Activated naive CD4-positive, alpha-beta T cell treated with anti-CD3 and anti-CD28 coated beads for 36 hours (primary cell): ENCODE measurements at regions of chr2 and their contacts with region 1.

Region 1: DNA sequence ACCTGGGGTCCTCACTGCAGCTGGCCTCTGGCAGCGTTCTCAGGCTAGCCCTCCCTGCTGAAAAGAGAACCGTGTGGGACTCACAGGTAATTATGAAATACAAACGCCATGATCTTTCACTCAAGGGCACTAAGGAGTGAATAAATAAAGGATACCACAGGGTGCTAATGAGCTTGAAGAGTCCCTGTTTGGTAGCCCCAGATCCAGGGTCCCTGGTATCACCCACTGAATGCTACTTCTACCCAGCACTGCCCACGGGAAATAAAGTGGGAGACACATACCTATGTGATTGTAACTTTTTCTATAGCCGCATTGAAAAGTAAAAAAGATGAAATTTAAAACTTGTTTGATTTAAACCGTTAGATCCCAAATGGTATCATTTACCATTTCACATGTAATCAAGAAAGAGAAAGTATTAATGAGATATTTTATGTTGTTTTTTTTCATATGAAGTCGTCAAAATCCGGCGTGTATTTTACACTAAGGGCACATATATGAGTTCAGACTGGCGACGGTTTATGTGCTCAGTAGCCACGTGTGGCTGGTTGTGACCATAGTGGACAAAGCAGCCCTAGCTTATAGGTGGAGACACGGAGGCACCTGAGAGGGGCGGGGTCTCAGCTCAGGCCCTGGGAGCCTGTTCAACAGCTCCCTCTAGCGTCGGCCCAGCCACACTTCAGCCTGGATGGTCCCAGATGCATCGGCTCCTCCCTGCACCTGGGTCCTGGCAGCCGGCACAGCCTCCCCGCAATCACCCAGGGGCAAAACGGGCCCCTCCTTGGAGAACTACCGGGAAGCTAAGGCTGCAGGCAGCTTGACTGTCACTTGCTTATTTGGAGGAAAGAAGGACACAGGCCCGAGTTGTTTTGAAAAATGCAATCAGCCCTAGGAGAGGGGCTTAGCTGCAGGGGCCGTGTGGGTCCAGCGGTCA is 39.2 kb downstream of the ODC1 start:
- DNase-seq: peak; percentile 89
- H3K4me3 Mint-ChIP-seq: peak overlapping the region; percentile 59
- H3K27ac Mint-ChIP-seq: peak overlapping the region; percentile 97
- H3K4me1 Mint-ChIP-seq: peaks cover 46% of the 10 kb centered on the region
- H3K27me3 Mint-ChIP-seq: no peaks in the 10 kb centered on the region

Region 2: DNA sequence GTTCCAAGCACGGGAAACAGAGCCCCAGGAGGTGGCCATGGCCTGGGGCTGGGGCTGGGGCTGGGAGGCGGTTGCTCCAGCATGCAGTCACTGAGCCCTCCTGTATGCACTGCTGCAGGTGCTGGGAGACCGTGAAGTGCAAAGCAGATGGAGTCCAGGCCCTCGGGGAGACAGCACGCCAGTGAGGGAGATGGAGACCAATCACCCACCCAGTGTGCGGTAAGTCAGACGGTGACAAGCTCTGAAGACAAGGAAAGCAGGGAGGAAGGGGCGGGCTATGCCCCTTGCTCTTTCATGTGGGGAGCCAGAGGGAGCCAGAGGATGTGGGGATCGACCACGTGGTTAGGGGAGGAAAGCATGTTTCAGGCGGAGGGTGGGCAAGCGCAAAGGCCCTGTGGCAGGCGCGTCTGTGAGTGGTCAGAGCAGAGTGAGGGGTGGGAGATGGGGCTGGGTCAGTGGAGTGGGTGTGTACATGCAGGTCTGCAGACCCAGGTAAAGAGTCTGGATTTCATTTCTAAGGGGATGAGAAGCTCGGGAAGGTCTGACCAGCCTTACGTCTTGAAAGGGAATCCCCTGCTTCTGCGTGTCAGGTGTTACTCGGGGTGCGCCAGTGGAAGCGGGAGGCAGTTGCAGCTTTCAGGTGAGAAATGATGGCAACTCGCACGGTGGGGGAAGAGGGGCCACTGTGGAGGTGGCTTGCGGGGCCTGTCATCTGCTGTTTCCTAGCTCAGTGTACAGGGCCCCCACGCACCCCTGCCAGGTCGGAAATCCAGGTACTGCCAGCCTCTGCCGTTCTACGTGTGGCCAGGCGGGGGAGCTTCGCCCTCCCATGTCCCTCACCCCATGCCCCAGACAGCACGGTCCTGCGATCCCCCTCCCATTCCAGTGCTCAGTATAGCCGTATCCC is 266.9 kb before region 1 on chr2:
- CTCF ChIA-PET with region 1: interaction called, 38 read pairs
- intact Hi-C with region 1: loop called (anchors 1 kb)
- DNase-seq: no peak
- H3K4me3 Mint-ChIP-seq: no peak overlapping the region
- H3K27ac Mint-ChIP-seq: no peak overlapping the region
- H3K4me1 Mint-ChIP-seq: peaks cover 18% of the 10 kb centered on the region
- H3K27me3 Mint-ChIP-seq: no peaks in the 10 kb centered on the region

Region 3: GRCh38 chr2:10269711-10270610 is 139.0 kb before region 1 on chr2:
- CTCF ChIA-PET with region 1: interaction called, 31 read pairs
- intact Hi-C with region 1: loop called (anchors 1 kb)
- DNase-seq: no peak
- H3K4me3 Mint-ChIP-seq: no peak overlapping the region
- H3K27ac Mint-ChIP-seq: no peak overlapping the region
- H3K4me1 Mint-ChIP-seq: peaks cover 7% of the 10 kb centered on the region
- H3K27me3 Mint-ChIP-seq: no peaks in the 10 kb centered on the region

Region 4: DNA sequence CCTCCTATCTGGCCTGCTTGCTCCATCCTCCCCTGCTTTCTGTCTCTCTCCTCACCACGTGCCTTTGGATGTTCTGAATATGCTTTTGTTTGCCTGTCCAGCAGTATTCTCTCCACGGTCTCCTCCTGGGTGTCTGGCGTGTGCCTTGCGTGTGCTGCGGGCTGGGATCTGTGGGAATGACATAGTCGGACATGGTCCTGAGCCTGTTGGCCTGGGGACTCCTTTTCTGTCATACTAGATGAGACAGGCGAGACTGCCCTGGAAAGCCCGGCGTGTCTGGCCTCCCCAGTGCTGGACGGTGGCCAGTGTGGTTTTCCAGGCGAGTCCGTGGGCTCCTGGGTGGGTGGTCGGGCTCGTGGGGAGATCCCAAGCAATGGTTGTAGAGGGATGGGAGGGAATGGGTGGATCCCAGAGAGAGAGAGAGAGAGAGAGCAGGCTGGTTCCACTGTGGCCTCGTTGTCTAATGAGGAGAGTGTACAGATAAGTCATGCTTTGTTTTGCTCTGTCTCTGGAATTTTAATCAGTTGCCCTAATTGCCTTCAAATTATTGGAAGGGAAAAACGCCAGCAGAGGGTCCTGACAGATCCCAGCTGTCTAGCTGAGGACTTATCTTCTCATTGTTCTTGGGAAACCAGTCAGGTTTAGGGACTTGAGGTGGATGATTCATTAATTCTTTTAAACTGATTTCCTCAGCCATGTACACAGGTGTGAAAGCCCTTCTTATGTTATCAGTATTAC is 47.9 kb before region 1 on chr2:
- CTCF ChIA-PET with region 1: interaction called, 11 read pairs
- intact Hi-C with region 1: no loop called
- DNase-seq: no peak
- H3K4me3 Mint-ChIP-seq: no peak overlapping the region
- H3K27ac Mint-ChIP-seq: no peak overlapping the region
- H3K4me1 Mint-ChIP-seq: peaks cover 51% of the 10 kb centered on the region
- H3K27me3 Mint-ChIP-seq: no peaks in the 10 kb centered on the region

Region 5: GRCh38 chr2:10392951-10393644 is 15.8 kb before region 1 on chr2:
- CTCF ChIA-PET with region 1: interaction called, 17 read pairs
- intact Hi-C with region 1: no loop called
- DNase-seq: no peak
- H3K4me3 Mint-ChIP-seq: no peak overlapping the region
- H3K27ac Mint-ChIP-seq: no peak overlapping the region
- H3K4me1 Mint-ChIP-seq: peaks cover 45% of the 10 kb centered on the region
- H3K27me3 Mint-ChIP-seq: no peaks in the 10 kb centered on the region

Region 6: DNA sequence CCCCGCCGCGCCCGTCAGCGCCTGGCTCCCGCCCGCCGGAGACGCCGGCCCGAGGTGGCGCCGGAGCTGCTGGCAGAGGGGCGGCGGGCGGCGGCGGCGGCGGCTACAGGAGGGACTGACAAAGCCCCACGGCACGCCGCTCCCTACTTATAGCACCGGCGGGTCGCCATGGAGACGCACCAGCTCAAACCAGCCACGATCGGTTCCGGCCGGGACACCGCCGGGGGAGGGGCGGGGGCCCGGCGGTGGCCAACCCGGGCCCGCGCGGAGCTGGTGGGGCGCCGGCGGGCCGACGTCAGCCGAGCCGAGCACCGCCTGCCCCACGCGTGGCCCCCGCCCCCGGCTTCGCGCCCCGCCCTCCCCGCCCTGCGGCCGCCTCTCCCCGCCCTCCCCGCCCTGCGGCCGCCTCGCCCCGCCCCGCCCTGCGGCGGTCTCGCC is 39.3 kb after region 1 on chr2 and contains the start of gene ODC1:
- CTCF ChIA-PET with region 1: interaction called, 9 read pairs
- intact Hi-C with region 1: loop called (anchors 1 kb)
- DNase-seq: peak; percentile 89
- H3K4me3 Mint-ChIP-seq: peak within 1 kb of the TSS; percentile 85
- H3K27ac Mint-ChIP-seq: peak within 1 kb of the TSS; percentile 91
- H3K4me1 Mint-ChIP-seq: peaks cover 56% of the 10 kb centered on the region
- H3K27me3 Mint-ChIP-seq: no peaks in the 10 kb centered on the region
- total RNA-seq, gene ODC1: 174 to 177 TPM

Region 7: GRCh38 chr2:10620481-10620880 is 211.6 kb after region 1 on chr2:
- CTCF ChIA-PET with region 1: no interaction called
- intact Hi-C with region 1: no loop called
- DNase-seq: no peak
- H3K4me3 Mint-ChIP-seq: no peak overlapping the region
- H3K27ac Mint-ChIP-seq: no peak overlapping the region
- H3K4me1 Mint-ChIP-seq: peaks cover 31% of the 10 kb centered on the region
- H3K27me3 Mint-ChIP-seq: no peaks in the 10 kb centered on the region